Vagina (tissue), 2 donors: ENCODE measurements at regions of chr4 and their contacts with region 1.

Region 1: GRCh38 chr4:137124278-137124932 is 407.9 kb downstream of the PCDH18 start:
- DNase-seq: no peak
- H3K4me3 ChIP-seq: peak overlapping the region; percentile 31 to 32
- H3K27ac ChIP-seq: no peak overlapping the region
- H3K4me1 ChIP-seq: no peaks in the 10 kb centered on the region
- H3K27me3 ChIP-seq: no peaks in the 10 kb centered on the region
- CTCF ChIP-seq: peak; percentile 13 to 67 (median 64)
- POLR2A ChIP-seq: no peak

Region 2: DNA sequence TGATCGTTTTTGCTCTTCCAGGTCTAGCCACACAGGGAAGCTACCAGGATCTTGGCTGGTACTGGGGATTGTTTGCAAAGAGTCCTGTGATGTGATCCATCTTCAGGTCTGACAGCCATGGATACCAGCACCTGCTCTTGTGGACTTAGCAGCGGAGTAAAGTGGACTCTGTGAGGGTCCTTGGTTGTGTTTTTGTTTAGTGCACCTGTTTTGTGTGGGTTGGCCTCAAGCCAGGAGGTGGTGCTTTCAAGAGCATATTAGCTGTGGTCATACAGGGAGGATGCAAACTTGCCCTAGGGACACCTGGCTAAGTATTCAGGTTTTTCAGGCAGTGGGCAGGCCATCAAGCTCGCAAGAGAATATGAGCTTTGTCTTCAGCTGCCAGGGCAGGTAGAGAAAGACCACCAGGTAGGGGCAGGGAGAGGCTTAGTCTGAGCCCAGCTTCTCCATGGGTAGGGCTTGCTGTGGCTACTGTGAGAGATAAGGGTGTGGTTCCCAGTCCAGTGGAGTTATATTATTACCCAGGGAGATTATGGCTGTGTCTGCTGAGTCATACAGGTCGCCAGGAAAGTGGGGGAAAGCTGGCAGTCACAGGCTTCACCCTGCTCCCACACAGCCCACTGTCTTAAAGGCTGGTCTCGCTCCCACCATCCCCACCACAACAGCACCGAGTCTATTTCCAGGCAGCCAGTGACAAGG is 114.2 kb after region 1 on chr4:
- intact Hi-C with region 1: no loop called
- DNase-seq: no peak
- H3K4me3 ChIP-seq: no peak overlapping the region
- H3K27ac ChIP-seq: no peak overlapping the region
- H3K4me1 ChIP-seq: no peaks in the 10 kb centered on the region
- H3K27me3 ChIP-seq: no peaks in the 10 kb centered on the region
- CTCF ChIP-seq: no peak
- POLR2A ChIP-seq: no peak

Region 3: GRCh38 chr4:137853435-137853834 is 729.0 kb after region 1 on chr4:
- intact Hi-C with region 1: loop called (anchors 10 kb)
- DNase-seq: no peak
- H3K4me3 ChIP-seq: no peak overlapping the region
- H3K27ac ChIP-seq: no peak overlapping the region
- H3K4me1 ChIP-seq: no peaks in the 10 kb centered on the region
- H3K27me3 ChIP-seq: no peaks in the 10 kb centered on the region
- CTCF ChIP-seq: no peak
- POLR2A ChIP-seq: no peak

Region 4: GRCh38 chr4:138182838-138183426 is 1058.5 kb after region 1 on chr4:
- intact Hi-C with region 1: loop called (anchors 10 kb)
- DNase-seq: no peak
- H3K4me3 ChIP-seq: no peak overlapping the region
- H3K27ac ChIP-seq: no peak overlapping the region
- H3K4me1 ChIP-seq: no peaks in the 10 kb centered on the region
- H3K27me3 ChIP-seq: no peaks in the 10 kb centered on the region
- CTCF ChIP-seq: peak in 1 of 3 experiments; percentile 54
- POLR2A ChIP-seq: no peak